ENCODE measurements at regions of chr12 and their contacts with region 1.

Region 1: GRCh38 chr12:2877047-2877952 is at the starts of genes FOXM1 and RHNO1:
- DNase-seq: peak; percentile 79 to 92 (median 88)
- ATAC-seq: peak; percentile 87
- H3K4me3 ChIP-seq: peak within 1 kb of the TSS; percentile 83
- H3K4me3 Mint-ChIP-seq: peak within 1 kb of the TSS; percentile 89 to 100 (median 98)
- H3K27ac ChIP-seq: peak within 1 kb of the TSS; percentile 94
- H3K27ac Mint-ChIP-seq: peak within 1 kb of the TSS; percentile 98 to 100 (median 99)
- H3K4me1 ChIP-seq: peaks cover 10 to 14% of the 10 kb centered on the region in 2 donors
- H3K4me1 Mint-ChIP-seq: peaks cover 21 to 54% (median 45%) of the 10 kb centered on the region in 7 donors
- H3K27me3 ChIP-seq: no peaks in the 10 kb centered on the region
- H3K27me3 Mint-ChIP-seq: no peaks in the 10 kb centered on the region
- total RNA-seq, gene FOXM1: 0.35 to 77.2 (median 0.82) TPM in 4 of 5 experiments, not detected in the other
- total RNA-seq, gene RHNO1: 13.7 to 44.3 (median 28.7) TPM

Region 2: DNA sequence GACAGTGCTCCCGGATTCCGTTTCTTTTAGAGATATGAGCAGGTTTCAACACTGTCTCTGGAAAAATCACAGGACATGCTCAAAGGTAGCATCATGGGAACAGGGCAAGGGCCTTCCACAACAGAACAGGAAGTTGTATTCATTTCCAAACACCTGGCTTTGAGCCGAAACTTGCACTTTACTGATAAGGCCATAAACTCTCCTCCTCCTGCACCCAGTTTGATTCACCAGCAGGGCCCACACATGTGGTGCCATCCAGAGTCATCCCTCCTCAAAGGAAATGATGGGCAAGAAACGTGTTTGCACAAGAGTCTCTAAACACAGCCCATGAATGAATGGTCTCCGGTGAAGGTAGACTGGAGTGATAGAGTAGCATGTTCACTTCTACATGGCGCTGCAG is 350.9 kb before region 1 on chr12:
- CTCF ChIA-PET with region 1: no interaction called
- POLR2A ChIA-PET with region 1: no interaction called
- intact Hi-C with region 1: no loop called
- DNase-seq: no peak
- ATAC-seq: no peak
- H3K4me3 ChIP-seq: no peak overlapping the region
- H3K4me3 Mint-ChIP-seq: no peak overlapping the region
- H3K27ac ChIP-seq: no peak overlapping the region
- H3K27ac Mint-ChIP-seq: no peak overlapping the region
- H3K4me1 ChIP-seq: no peaks in the 10 kb centered on the region
- H3K4me1 Mint-ChIP-seq: peaks cover 0 to 14% (median 0%) of the 10 kb centered on the region in 7 donors
- H3K27me3 ChIP-seq: no peaks in the 10 kb centered on the region
- H3K27me3 Mint-ChIP-seq: peaks cover 0 to 11% (median 4%) of the 10 kb centered on the region in 5 donors

Region 3: DNA sequence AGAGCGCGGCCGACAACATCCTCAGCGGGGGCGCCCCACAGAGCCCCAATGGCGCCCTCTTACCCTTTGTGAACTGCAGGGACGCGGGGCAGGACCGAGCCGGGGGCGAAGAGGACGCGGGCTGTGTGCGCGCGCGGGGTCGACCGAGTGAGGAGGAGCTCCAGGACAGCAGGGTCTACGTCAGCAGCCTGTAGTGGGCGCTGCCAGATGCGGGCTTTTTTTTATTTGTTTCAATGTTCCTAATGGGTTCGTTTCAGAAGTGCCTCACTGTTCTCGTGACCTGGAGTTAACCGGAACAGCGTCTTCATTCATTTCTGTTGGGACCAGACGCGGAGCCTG is 186.3 kb before region 1 on chr12:
- CTCF ChIA-PET with region 1: no interaction called
- POLR2A ChIA-PET with region 1: interaction called, 3 read pairs
- intact Hi-C with region 1: loop called in 1 of 2 experiments (anchors 5 kb)
- DNase-seq: peak in 8 of 9 donors; percentile 36 to 66 (median 56)
- ATAC-seq: peak; percentile 75
- H3K4me3 ChIP-seq: peak overlapping the region; percentile 92
- H3K4me3 Mint-ChIP-seq: peak overlapping the region; percentile 88 to 100 (median 93)
- H3K27ac ChIP-seq: peak overlapping the region; percentile 79
- H3K27ac Mint-ChIP-seq: peak overlapping the region; percentile 60 to 93 (median 86)
- H3K4me1 ChIP-seq: peaks cover 15 to 22% of the 10 kb centered on the region in 2 donors
- H3K4me1 Mint-ChIP-seq: peaks cover 36 to 57% (median 49%) of the 10 kb centered on the region in 7 donors
- H3K27me3 ChIP-seq: no peaks in the 10 kb centered on the region
- H3K27me3 Mint-ChIP-seq: peaks cover 0 to 12% (median 1%) of the 10 kb centered on the region in 5 donors

Region 4: DNA sequence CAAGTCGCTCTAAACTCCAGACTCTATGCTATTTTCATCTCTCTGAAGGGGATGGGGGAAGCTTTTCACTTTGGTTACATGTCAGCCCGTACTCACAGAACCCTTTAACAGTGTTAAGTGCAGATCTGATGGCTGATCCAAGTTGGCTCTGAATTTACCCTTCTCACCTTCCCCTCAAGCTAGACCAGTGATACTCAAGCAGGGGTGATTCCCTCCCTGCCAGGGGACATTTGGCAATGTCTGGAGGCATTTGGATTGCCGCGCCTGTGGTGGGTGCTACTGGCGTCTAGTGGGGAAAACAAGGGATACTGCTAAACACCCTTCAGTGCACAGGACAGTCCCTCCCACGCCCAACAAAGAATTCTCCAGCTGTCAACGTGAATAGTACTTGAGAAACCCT is 14.4 kb before region 1 on chr12:
- CTCF ChIA-PET with region 1: no interaction called
- POLR2A ChIA-PET with region 1: interaction called, 4 read pairs
- intact Hi-C with region 1: loop called in 1 of 2 experiments (anchors 1 kb)
- DNase-seq: no peak
- ATAC-seq: no peak
- H3K4me3 ChIP-seq: no peak overlapping the region
- H3K4me3 Mint-ChIP-seq: no peak overlapping the region
- H3K27ac ChIP-seq: no peak overlapping the region
- H3K27ac Mint-ChIP-seq: peak overlapping the region in 1 of 9 donors; percentile 43
- H3K4me1 ChIP-seq: no peaks in the 10 kb centered on the region
- H3K4me1 Mint-ChIP-seq: peaks cover 0 to 6% (median 0%) of the 10 kb centered on the region in 7 donors
- H3K27me3 ChIP-seq: no peaks in the 10 kb centered on the region
- H3K27me3 Mint-ChIP-seq: no peaks in the 10 kb centered on the region

Region 5: DNA sequence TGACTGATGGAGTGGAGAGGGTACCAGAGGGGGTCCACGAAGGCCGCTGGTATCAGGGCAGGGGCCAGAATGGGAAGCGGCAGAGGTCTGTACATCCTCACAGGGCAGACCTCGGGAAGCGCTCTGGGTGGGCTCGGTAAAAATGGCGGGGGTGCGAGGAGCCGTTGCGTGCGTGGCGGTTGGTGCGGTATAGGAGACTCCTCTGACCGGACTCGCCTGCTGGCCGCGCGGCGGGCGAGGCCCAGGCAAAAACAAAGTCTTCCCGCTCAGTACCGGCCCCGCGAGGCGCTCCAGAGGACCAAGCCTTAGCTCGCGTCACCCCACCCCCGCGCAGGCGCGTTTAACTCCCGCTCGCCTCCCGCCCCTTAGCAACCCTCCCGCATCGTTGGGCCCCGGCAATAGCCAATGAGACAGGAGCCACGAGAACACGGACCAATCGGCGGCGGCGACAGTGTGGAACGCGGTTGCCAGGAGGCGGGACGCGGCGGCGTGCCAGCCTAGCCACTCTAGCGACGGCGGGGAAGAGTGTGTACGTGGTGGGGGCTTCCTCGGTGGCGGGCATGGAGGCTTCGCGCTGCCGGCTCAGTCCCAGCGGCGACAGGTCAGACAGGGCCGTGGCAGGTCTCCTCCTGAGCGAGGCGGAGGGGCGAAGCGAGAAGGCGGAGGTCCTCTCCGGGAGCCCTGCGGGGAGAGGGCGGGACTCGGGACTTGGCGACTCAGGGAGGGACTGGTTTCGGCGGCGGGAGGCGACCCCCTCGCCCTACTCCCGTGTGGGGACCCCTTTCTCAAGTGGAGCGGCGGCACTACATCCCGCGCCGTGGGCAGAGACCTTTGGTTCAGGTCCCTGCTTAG is 13.3 kb after region 1 on chr12 and contains the start of gene TULP3:
- CTCF ChIA-PET with region 1: interaction called, 6 read pairs
- POLR2A ChIA-PET with region 1: interaction called, 21 read pairs
- intact Hi-C with region 1: loop called (anchors 1 kb)
- DNase-seq: peak; percentile 95 to 98 (median 97)
- ATAC-seq: peak; percentile 99
- H3K4me3 ChIP-seq: peak within 1 kb of the TSS; percentile 96
- H3K4me3 Mint-ChIP-seq: peak within 1 kb of the TSS; percentile 93 to 100 (median 98)
- H3K27ac ChIP-seq: peak within 1 kb of the TSS; percentile 89
- H3K27ac Mint-ChIP-seq: peak within 1 kb of the TSS; percentile 81 to 97 (median 97)
- H3K4me1 ChIP-seq: peaks cover 3 to 8% of the 10 kb centered on the region in 2 donors
- H3K4me1 Mint-ChIP-seq: peaks cover 15 to 35% (median 31%) of the 10 kb centered on the region in 7 donors
- H3K27me3 ChIP-seq: no peaks in the 10 kb centered on the region
- H3K27me3 Mint-ChIP-seq: peaks cover 0 to 2% (median 0%) of the 10 kb centered on the region in 5 donors
- total RNA-seq, gene TULP3: 4.7 to 9.6 (median 7.4) TPM

Measured in naive thymus-derived CD4-positive, alpha-beta T cell (primary cell).